ENCODE measurements at regions of chr19 and their contacts with region 1.

Region 1: DNA sequence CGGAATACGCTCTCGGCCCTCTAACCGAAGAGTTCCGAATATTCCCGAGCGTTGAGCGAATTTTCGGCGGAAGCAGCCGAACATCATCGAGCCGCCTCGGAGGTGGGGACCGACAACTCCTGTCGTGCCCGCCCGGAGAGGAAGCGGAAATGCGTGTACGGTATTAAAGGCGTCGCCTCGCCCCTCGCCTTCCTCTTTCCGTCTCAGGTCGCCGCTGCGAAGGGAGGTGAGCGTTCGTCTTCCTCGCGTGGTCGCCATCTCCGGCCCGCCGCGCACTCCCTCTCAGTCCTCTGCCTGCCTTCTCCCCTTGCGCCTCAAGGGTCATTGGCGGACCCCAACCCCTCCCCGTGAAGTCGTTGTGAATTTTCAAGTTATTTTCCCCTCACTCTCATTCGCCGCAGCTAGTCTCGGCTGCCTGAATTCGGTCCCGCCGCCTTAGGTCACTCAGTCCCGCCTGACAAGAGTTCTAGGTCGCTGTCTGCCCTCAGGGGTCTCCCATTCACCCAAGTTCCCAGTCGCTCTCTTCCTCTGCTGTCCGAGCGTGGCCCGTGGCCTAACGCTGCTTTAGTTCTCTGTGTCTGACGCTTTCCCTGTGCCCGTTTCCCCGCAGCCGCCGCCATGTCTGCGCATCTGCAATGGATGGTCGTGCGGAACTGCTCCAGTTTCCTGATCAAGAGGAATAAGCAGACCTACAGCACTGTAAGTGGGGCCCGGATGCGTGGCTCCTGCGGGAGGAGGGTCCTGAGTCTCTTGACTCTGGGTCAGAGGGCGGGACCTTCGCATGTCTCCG is at the start of gene RPL28:
- DNase-seq: peak; percentile 98
- ATAC-seq: peak; percentile 84
- H3K4me3 Mint-ChIP-seq: peak within 1 kb of the TSS; percentile 99
- H3K27ac Mint-ChIP-seq: peak within 1 kb of the TSS; percentile 99
- H3K4me1 Mint-ChIP-seq: peaks cover 53% of the 10 kb centered on the region
- H3K27me3 Mint-ChIP-seq: no peaks in the 10 kb centered on the region
- CTCF ChIP-seq: no peak
- total RNA-seq, gene RPL28: 3,001 to 3,058 TPM

Region 2: DNA sequence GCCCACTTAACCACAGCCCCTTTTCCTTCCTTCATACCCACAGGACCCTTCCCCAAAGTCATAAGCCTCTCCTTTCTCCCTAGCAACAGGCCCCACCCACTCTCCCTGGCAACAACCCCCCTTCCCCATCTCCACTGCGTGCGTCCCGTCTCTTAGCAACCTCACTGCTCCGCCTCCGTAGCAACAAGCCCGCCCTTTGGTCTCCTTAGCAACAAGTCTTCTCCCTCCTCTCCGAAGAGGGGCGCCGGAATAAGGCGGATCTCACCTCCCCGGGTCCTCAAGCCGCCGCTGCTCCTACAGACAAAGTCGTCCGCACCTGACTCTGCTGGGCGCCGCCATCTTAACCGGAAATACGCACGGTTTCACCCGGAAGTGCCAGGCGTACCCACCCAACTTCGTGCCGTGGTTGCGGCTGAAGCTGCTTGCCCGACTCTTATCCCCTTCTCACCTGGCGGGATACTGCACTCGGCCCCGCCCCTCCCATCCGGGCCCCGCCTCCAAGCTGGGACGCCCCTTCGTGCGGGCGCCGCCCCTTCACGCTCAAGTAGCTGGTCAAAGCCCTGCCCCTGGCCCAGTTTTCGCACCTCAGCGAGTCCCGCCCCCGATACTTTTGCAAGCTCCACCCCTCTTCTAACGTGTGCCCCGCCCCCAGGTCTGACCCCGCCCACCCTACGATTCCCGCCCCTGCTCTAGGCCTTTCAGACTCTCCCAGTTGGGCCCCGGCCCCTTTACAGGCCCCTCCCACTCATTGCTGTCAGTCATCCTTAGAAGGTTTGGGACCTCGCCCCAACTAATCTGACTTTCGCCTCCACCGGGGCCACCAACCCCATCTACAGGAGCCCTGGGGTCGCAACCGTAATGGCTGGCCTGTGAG is 105.9 kb before region 1 on chr19 and contains the start of gene HSPBP1:
- CTCF ChIA-PET with region 1: interaction called, 3 read pairs
- POLR2A ChIA-PET with region 1: interaction called, 10 read pairs
- intact Hi-C with region 1: no loop called
- DNase-seq: peak; percentile 98
- ATAC-seq: peak; percentile 95
- H3K4me3 Mint-ChIP-seq: peak within 1 kb of the TSS; percentile 92
- H3K27ac Mint-ChIP-seq: peak within 1 kb of the TSS; percentile 97
- H3K4me1 Mint-ChIP-seq: peaks cover 29% of the 10 kb centered on the region
- H3K27me3 Mint-ChIP-seq: no peaks in the 10 kb centered on the region
- CTCF ChIP-seq: no peak
- total RNA-seq, gene HSPBP1: 46.4 to 47.1 TPM

Region 3: DNA sequence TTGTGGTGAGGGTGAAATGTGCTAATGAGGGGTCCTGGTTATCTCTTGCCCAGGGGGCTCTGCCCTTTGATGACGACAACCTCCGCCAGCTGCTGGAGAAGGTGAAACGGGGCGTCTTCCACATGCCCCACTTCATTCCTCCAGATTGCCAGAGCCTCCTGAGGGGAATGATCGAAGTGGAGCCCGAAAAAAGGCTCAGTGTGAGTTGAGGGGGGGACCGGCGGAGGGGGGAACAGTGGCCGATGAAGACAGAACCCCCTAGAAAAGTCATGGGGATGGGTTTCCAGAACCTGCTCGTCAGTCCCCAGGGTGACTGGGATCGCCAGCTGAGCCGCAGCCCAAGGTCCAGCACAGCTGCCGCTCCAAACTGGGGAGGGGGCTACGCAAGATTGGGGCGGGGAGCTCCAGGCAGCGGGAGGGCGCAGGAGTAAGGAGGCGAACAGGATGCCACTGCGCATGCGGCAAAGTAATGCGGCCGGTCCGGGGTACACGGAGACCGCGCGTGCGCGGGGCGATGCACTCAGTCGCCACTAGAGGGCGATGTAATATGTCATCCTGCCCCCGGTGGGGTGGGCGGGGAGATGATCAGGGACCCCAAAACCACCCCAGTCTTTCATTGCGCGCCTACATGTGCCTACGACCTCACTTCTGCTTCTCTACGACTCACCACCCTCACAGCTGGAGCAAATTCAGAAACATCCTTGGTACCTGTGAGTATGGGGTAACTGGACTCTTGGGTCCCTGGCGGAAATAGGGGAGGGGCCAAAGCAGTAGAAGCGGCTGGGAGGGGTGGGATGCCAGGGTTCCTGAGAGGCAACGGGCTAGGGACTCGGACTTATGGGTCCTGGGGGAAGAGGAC is 84.2 kb before region 1 on chr19:
- CTCF ChIA-PET with region 1: interaction called, 33 read pairs
- POLR2A ChIA-PET with region 1: interaction called, 18 read pairs
- intact Hi-C with region 1: loop called (anchors 5 kb)
- DNase-seq: peak; percentile 97
- ATAC-seq: peak; percentile 91
- H3K4me3 Mint-ChIP-seq: peak overlapping the region; percentile 75
- H3K27ac Mint-ChIP-seq: peak overlapping the region; percentile 89
- H3K4me1 Mint-ChIP-seq: peaks cover 8% of the 10 kb centered on the region
- H3K27me3 Mint-ChIP-seq: no peaks in the 10 kb centered on the region
- CTCF ChIP-seq: peak; percentile 98

Region 4: DNA sequence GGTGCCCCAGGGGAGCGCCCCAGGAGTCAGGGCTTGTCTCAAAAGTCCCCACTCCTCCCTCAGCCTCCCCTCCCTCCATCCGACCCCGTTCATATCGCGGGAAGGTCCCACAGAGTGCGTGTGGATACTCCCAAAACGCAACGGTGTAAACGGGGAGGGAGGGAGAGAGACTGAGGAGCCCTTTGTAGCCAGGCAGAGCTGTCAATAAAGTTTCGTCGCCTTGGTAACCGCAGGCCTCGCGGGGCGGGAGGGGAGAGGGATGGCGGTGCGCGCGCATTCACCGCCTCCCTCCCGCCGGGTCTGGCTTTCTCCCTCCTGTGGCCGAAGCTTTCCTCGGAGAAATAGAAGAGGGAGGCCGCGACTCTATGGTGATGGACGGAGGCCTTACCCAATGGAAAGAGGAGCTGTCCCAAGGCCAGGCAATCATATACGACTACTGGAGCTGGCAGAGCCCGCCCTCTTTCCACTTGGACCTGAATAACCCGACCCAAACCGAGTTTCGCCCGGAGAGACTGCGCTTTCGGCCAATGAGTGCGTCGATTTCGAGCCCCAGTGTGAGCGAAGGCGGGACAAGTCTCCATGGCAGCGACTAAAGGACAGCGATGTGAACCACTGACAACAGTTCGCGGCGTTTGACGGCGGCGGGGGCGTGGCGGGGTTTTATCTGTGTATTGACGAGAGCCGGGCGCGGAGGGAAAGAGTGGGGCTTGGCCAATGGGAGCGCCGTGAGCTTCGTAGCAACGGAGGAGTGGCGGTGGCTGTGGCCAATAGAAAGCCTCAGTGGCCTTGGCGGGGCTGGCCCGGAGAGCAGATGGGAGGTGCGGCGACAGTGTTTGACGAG is 46.7 kb before region 1 on chr19 and contains the start of gene KMT5C:
- CTCF ChIA-PET with region 1: interaction called, 8 read pairs
- POLR2A ChIA-PET with region 1: interaction called, 19 read pairs
- intact Hi-C with region 1: no loop called
- DNase-seq: peak; percentile 100
- ATAC-seq: peak; percentile 84
- H3K4me3 Mint-ChIP-seq: peak within 1 kb of the TSS; percentile 90
- H3K27ac Mint-ChIP-seq: peak within 1 kb of the TSS; percentile 98
- H3K4me1 Mint-ChIP-seq: peaks cover 12% of the 10 kb centered on the region
- H3K27me3 Mint-ChIP-seq: peaks cover 4% of the 10 kb centered on the region
- CTCF ChIP-seq: no peak
- total RNA-seq, gene KMT5C: 32.6 to 33.1 TPM

Region 5: DNA sequence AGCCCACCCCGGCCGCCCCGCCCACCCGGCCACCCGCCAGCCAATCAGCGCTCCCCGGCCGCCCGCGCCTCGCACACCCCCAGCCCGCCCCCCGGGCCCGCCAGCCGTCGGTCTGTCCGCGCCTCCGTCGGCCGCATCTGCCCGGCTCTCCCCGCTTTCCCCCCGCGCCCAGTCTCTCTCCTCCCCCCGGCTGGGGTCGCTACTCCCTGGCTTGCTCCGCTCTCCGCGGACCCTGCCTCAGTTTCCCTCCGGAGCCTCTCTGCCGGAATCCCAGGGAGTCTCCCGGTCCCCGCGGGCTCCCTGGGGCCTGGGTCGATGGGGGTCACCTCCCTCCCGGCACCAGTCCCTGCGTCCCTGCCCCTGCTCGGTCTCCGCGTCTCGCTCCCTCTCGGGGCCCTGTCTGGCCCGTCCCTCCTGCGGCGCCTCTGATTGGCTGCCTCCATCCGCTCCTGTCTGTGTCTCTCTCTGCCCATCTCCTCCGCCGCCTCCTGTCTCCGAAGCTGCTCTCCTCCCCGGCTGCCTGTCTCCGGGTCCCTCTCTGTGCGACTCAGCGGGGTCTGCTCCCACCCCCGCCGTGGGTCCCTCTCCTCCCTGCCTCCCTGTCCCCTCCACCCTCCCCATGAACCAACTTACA is 16.1 kb before region 1 on chr19:
- CTCF ChIA-PET with region 1: interaction called, 3 read pairs
- POLR2A ChIA-PET with region 1: interaction called, 37 read pairs
- intact Hi-C with region 1: no loop called
- DNase-seq: peak; percentile 66
- ATAC-seq: peak; percentile 62
- H3K4me3 Mint-ChIP-seq: peak overlapping the region; percentile 57
- H3K27ac Mint-ChIP-seq: no peak overlapping the region
- H3K4me1 Mint-ChIP-seq: peaks cover 15% of the 10 kb centered on the region
- H3K27me3 Mint-ChIP-seq: peaks cover 43% of the 10 kb centered on the region
- CTCF ChIP-seq: no peak

Region 6: DNA sequence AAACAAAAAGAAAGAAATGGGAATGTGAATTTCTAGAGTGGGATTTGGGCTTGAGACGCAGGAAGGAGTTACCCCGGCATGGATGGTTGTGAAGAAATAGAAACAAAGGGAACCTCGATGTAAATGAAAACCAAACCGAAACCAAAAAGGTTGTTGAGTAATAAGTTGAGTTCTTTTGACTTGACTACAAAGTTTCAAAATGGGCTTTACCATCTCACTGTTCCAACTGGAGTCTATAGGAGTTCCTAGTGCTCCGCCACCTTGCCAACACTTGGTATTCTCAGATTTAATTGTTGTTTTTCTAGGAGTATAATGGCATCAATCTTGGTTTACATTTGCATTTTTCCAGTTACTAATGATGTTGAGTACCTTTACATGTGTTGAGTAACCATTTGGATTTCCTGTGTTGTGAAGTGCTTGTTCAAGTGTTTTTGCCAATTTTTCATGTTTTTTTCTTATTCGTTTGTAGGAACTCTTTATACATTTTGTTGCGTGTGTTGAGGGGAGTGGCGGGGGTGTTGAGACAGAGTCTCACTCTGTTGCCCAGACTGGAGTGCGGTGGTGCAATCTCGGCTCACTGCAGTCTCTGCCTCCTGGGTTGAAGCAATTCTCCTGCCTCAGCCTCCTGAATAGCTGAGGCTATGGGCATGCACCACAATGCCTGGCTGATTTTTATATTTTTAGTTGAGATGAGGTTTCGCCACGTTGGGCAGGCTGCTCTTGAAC is 12.4 kb after region 1 on chr19:
- CTCF ChIA-PET with region 1: interaction called, 5 read pairs
- POLR2A ChIA-PET with region 1: interaction called, 217 read pairs
- intact Hi-C with region 1: no loop called
- DNase-seq: no peak
- ATAC-seq: peak; percentile 38
- H3K4me3 Mint-ChIP-seq: no peak overlapping the region
- H3K27ac Mint-ChIP-seq: no peak overlapping the region
- H3K4me1 Mint-ChIP-seq: peaks cover 18% of the 10 kb centered on the region
- H3K27me3 Mint-ChIP-seq: no peaks in the 10 kb centered on the region
- CTCF ChIP-seq: no peak

Region 7: GRCh38 chr19:55407800-55408532 is 22.0 kb after region 1 on chr19:
- CTCF ChIA-PET with region 1: interaction called, 3 read pairs
- POLR2A ChIA-PET with region 1: interaction called, 217 read pairs
- intact Hi-C with region 1: no loop called
- DNase-seq: peak; percentile 98
- ATAC-seq: peak; percentile 94
- H3K4me3 Mint-ChIP-seq: peak overlapping the region; percentile 92
- H3K27ac Mint-ChIP-seq: peak overlapping the region; percentile 97
- H3K4me1 Mint-ChIP-seq: peaks cover 26% of the 10 kb centered on the region
- H3K27me3 Mint-ChIP-seq: no peaks in the 10 kb centered on the region
- CTCF ChIP-seq: no peak

Region 8: GRCh38 chr19:55426042-55426441 is 40.1 kb after region 1 on chr19:
- CTCF ChIA-PET with region 1: no interaction called
- POLR2A ChIA-PET with region 1: no interaction called
- intact Hi-C with region 1: no loop called
- DNase-seq: no peak
- ATAC-seq: no peak
- H3K4me3 Mint-ChIP-seq: no peak overlapping the region
- H3K27ac Mint-ChIP-seq: no peak overlapping the region
- H3K4me1 Mint-ChIP-seq: peaks cover 6% of the 10 kb centered on the region
- H3K27me3 Mint-ChIP-seq: peaks cover 17% of the 10 kb centered on the region
- CTCF ChIP-seq: no peak